Dorsolateral prefrontal cortex (tissue), 120 donors: ENCODE measurements at regions of chr10 and their contacts with region 1.

Region 1: DNA sequence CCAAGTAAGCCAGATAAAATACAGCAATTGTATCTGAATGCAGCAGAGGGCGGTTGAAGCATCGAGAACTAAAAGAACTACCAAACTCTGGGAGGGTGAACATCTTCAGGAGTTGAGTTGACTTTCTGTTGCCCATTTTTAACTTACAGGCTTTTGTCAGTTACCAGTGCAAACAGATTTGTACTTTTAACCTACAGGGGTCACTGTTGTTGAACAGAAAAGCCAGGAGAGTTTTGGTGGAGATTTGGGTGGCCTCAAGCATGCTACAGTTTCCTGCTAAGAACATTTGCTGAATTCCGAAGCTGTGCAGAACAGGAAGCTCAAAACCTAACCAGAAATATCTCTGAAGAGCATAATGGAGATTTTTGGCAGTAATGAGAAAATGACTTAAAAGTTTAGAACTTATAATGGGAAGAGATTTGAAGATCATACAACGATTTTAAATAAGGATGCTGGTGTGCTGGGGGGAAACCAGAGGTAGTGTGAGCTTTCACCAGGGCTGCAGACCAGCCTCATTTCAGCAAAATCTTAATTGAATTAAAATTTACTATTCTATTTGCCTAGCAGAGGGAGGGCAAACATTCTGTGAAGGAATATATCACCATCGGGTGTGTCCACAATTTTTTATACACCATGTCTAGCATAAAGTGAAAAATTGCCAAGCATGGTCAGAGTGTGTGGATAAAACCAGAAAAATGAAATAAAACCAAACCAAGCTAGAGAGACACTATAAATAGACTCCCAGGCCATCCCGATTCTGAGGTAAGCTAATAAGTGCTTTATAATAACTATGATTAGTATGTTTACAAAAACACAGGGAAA is 208.6 kb upstream of the CCDC6 start:
- DNase-seq: no peak
- H3K4me3 ChIP-seq: no peak overlapping the region
- H3K27ac ChIP-seq: peak overlapping the region in 3 of 59 donors; percentile 6 to 28 (median 6)
- H3K27me3 ChIP-seq: no peaks in the 10 kb centered on the region
- CTCF ChIP-seq: peak in 54 of 56 donors; percentile 24 to 77 (median 55)

Region 2: GRCh38 chr10:60099998-60100747 is 14.8 kb before region 1 on chr10:
- intact Hi-C with region 1: no loop called
- DNase-seq: peak in 1 of 10 donors; percentile 33
- H3K4me3 ChIP-seq: no peak overlapping the region
- H3K27ac ChIP-seq: peak overlapping the region in 25 of 59 donors; percentile 0 to 78 (median 29)
- H3K27me3 ChIP-seq: no peaks in the 10 kb centered on the region
- CTCF ChIP-seq: peak; percentile 57 to 92 (median 76)

Region 3: DNA sequence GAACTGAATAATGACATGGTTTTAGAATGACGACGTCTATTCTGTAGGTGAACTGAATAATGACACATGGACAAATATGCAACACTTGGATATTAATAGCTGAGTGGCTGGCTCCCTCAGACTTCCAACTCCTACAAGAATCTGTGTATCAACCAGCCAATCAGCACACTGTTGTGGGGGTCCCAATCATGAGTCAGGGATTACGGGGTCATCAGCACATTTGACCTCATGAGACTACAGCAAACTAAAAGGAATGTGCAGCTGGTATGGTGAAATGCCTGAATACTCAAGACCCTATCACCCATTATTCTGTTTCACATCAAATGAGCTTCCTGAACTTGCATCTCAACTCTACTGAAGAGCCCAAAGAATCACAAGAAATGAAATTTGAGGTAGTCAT is 82.2 kb after region 1 on chr10:
- intact Hi-C with region 1: loop called in 1 of 2 experiments (anchors 5 kb)
- DNase-seq: no peak
- H3K4me3 ChIP-seq: no peak overlapping the region
- H3K27ac ChIP-seq: peak overlapping the region in 5 of 59 donors; percentile 6 to 20 (median 11)
- H3K27me3 ChIP-seq: no peaks in the 10 kb centered on the region
- CTCF ChIP-seq: no peak